B cell (primary cell): ENCODE measurements at regions of chr5 and their contacts with region 1.

Region 1: GRCh38 chr5:50711273-50711672 is 44.8 kb downstream of the PARP8 start:
- DNase-seq: peak; percentile 82
- ATAC-seq: peak; percentile 87
- H3K4me3 ChIP-seq: peak overlapping the region in 4 of 5 experiments; percentile 11 to 43 (median 33)
- H3K4me3 Mint-ChIP-seq: peak overlapping the region; percentile 80
- H3K27ac ChIP-seq: peak overlapping the region; percentile 67 to 78
- H3K27ac Mint-ChIP-seq: peak overlapping the region; percentile 83
- H3K4me1 ChIP-seq: peaks cover 24 to 29% of the 10 kb centered on the region in 2 donors
- H3K4me1 Mint-ChIP-seq: peaks cover 58% of the 10 kb centered on the region
- H3K27me3 ChIP-seq: no peaks in the 10 kb centered on the region
- H3K27me3 Mint-ChIP-seq: no peaks in the 10 kb centered on the region
- CTCF ChIP-seq: no peak

Region 2: GRCh38 chr5:50697421-50698138 is 13.7 kb before region 1 on chr5:
- CTCF ChIA-PET with region 1: no interaction called
- POLR2A ChIA-PET with region 1: no interaction called
- intact Hi-C with region 1: loop called (anchors 2 kb)
- DNase-seq: no peak
- ATAC-seq: no peak
- H3K4me3 ChIP-seq: no peak overlapping the region
- H3K4me3 Mint-ChIP-seq: no peak overlapping the region
- H3K27ac ChIP-seq: no peak overlapping the region
- H3K27ac Mint-ChIP-seq: no peak overlapping the region
- H3K4me1 ChIP-seq: peaks cover 8 to 11% of the 10 kb centered on the region in 2 donors
- H3K4me1 Mint-ChIP-seq: peaks cover 46% of the 10 kb centered on the region
- H3K27me3 ChIP-seq: no peaks in the 10 kb centered on the region
- H3K27me3 Mint-ChIP-seq: no peaks in the 10 kb centered on the region
- CTCF ChIP-seq: no peak

Region 3: GRCh38 chr5:50751064-50751657 is 39.9 kb after region 1 on chr5:
- CTCF ChIA-PET with region 1: no interaction called
- POLR2A ChIA-PET with region 1: no interaction called
- intact Hi-C with region 1: loop called (anchors 5 kb)
- DNase-seq: peak; percentile 79
- ATAC-seq: peak; percentile 80
- H3K4me3 ChIP-seq: no peak overlapping the region
- H3K4me3 Mint-ChIP-seq: no peak overlapping the region
- H3K27ac ChIP-seq: peak overlapping the region in 1 of 2 donors; percentile 39
- H3K27ac Mint-ChIP-seq: no peak overlapping the region
- H3K4me1 ChIP-seq: peaks cover 0 to 2% of the 10 kb centered on the region in 2 donors
- H3K4me1 Mint-ChIP-seq: peaks cover 29% of the 10 kb centered on the region
- H3K27me3 ChIP-seq: no peaks in the 10 kb centered on the region
- H3K27me3 Mint-ChIP-seq: no peaks in the 10 kb centered on the region
- CTCF ChIP-seq: peak; percentile 92

Region 4: DNA sequence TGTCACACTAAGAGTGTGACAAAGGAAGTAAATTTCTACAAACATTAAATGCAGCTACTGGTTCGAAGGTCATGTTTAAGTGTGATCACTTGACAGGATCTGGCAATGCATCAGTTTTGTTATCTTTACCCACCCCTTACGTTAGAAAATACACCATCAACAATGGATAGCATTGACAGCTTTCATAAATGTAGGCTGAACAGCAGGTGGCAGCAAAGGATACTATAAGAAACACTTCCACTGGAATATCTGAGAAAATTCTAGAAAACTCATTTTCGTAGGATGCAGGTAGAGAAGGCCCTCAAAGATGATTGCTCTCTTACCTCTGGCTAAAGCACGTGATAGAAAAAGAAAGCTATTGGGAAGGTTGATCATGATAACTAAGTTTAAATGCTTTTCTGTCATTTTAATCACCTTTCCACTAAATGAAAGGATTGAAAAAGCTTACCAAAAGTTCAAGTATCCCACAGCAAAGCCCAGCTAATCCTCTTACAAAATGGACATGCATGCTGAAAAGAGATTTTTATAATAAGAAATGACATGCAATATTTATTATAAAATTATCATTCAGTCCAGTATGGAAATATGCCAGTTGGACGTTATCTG is 247.7 kb after region 1 on chr5:
- CTCF ChIA-PET with region 1: no interaction called
- POLR2A ChIA-PET with region 1: no interaction called
- intact Hi-C with region 1: no loop called
- DNase-seq: peak; percentile 38
- ATAC-seq: no peak
- H3K4me3 ChIP-seq: no peak overlapping the region
- H3K4me3 Mint-ChIP-seq: no peak overlapping the region
- H3K27ac ChIP-seq: no peak overlapping the region
- H3K27ac Mint-ChIP-seq: no peak overlapping the region
- H3K4me1 ChIP-seq: peaks cover 13% of the 10 kb centered on the region in 2 donors
- H3K4me1 Mint-ChIP-seq: peaks cover 9% of the 10 kb centered on the region
- H3K27me3 ChIP-seq: peaks cover 0 to 22% (median 10%) of the 10 kb centered on the region in 4 experiments
- H3K27me3 Mint-ChIP-seq: peaks cover 46% of the 10 kb centered on the region
- CTCF ChIP-seq: peak; percentile 58

Region 5: GRCh38 chr5:51091816-51092215 is 380.5 kb after region 1 on chr5:
- CTCF ChIA-PET with region 1: no interaction called
- POLR2A ChIA-PET with region 1: no interaction called
- intact Hi-C with region 1: no loop called
- DNase-seq: no peak
- ATAC-seq: no peak
- H3K4me3 ChIP-seq: no peak overlapping the region
- H3K4me3 Mint-ChIP-seq: no peak overlapping the region
- H3K27ac ChIP-seq: no peak overlapping the region
- H3K27ac Mint-ChIP-seq: no peak overlapping the region
- H3K4me1 ChIP-seq: no peaks in the 10 kb centered on the region
- H3K4me1 Mint-ChIP-seq: no peaks in the 10 kb centered on the region
- H3K27me3 ChIP-seq: no peaks in the 10 kb centered on the region
- H3K27me3 Mint-ChIP-seq: no peaks in the 10 kb centered on the region
- CTCF ChIP-seq: no peak